ENCODE measurements at regions of chr6 and their contacts with region 1.

Region 1: GRCh38 chr6:49636713-49637349 is at the start of gene RHAG:
- DNase-seq: no peak
- ATAC-seq: no peak
- H3K4me3 ChIP-seq: no peak within 1 kb of the TSS
- H3K27ac ChIP-seq: no peak within 1 kb of the TSS
- H3K4me1 ChIP-seq: no peaks in the 10 kb centered on the region
- CTCF ChIP-seq: no peak
- EP300 ChIP-seq: no peak
- POLR2A ChIP-seq: no peak
- RAD21 ChIP-seq: no peak
- polyA plus RNA-seq, gene RHAG: 0.05 and 0.11 TPM in 2 replicates

Region 2: GRCh38 chr6:49625140-49625539 is 11.7 kb before region 1 on chr6:
- CTCF ChIA-PET with region 1: interaction called, 10 read pairs
- POLR2A ChIA-PET with region 1: no interaction called
- DNase-seq: no peak
- ATAC-seq: no peak
- H3K4me3 ChIP-seq: no peak overlapping the region
- H3K27ac ChIP-seq: no peak overlapping the region
- H3K4me1 ChIP-seq: no peaks in the 10 kb centered on the region
- CTCF ChIP-seq: no peak
- EP300 ChIP-seq: no peak
- POLR2A ChIP-seq: no peak
- RAD21 ChIP-seq: no peak

Region 3: DNA sequence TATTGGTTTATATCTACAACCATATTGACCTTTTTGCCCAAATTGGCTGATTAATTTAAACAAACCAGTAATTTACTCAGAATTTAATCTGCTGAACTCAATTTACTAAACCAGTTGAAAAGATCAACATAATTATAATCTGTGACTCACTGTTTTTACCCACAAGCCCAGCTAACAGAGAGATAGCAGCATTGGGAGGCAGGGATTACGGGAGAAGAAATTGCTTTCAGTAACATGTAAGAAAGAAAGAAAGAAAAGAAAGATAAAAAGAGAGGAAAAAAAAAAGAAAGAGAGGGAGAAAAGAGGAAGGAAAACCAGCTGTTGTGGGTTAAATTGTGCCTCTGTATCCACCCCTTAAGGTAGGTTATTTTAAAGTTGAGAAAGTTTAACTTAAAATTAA is 13.2 kb after region 1 on chr6:
- CTCF ChIA-PET with region 1: no interaction called
- POLR2A ChIA-PET with region 1: no interaction called
- DNase-seq: no peak
- ATAC-seq: no peak
- H3K4me3 ChIP-seq: no peak overlapping the region
- H3K27ac ChIP-seq: no peak overlapping the region
- H3K4me1 ChIP-seq: no peaks in the 10 kb centered on the region
- CTCF ChIP-seq: no peak
- EP300 ChIP-seq: no peak
- POLR2A ChIP-seq: no peak
- RAD21 ChIP-seq: no peak

Measured in A549 (cell line).